SK-N-SH (cell line): ENCODE measurements at regions of chr1 and their contacts with region 1.

Region 1: DNA sequence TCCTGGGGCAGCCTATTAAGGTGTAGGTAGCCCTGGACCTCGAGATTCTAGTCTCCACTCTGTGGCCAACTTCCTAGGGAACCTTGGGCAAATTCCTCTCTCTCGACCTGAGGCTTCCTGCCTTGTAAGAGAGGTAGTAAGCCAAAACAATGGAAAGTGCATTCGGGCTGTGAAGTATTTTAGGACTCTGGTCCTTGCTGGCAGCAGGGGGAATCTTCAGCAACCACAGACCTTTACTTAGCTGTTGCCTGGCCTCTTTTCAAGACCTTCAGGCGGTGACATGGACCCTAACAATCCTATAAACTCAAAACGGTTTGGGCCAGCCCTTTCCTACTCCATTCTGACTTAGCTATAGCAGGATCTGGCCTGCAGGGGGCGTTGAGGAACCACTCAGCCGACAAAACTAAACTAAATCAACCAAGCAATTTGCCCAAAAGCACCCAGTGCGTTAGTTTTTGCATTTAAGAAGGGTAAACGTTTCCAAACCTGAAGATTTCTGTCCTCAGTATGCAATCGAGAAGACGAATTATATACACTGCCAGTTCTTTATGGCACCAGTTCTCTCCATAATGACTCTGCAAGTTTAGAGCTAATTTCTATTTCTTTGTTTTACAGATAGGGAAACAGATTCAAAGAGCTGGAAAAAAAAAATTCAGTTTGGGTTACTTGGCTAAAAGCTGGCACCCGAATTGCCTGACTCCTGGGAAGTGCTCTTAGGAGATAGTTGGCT is 10.9 kb upstream of the SESN2 start:
- DNase-seq: peak; percentile 69
- H3K4me3 ChIP-seq: peak overlapping the region; percentile 28 to 62
- H3K27ac ChIP-seq: peak overlapping the region; percentile 70 to 95
- H3K4me1 ChIP-seq: peaks cover 19 to 22% of the 10 kb centered on the region in 2 experiments; a peak in 3 of 4 replicates
- H3K27me3 ChIP-seq: no peaks in the 10 kb centered on the region
- CTCF ChIP-seq: peak; percentile 97
- EP300 ChIP-seq: no peak
- RAD21 ChIP-seq: peak; percentile 88

Region 2: GRCh38 chr1:28045777-28046176 is 202.7 kb before region 1 on chr1:
- CTCF ChIA-PET with region 1: no interaction called
- POLR2A ChIA-PET with region 1: no interaction called
- DNase-seq: no peak
- H3K4me3 ChIP-seq: no peak overlapping the region
- H3K27ac ChIP-seq: peak overlapping the region in 1 of 2 experiments; percentile 19; a peak in 2 of 4 replicates
- H3K4me1 ChIP-seq: peaks cover 0 to 9% of the 10 kb centered on the region in 2 experiments; a peak in 1 of 4 replicates
- H3K27me3 ChIP-seq: no peaks in the 10 kb centered on the region
- CTCF ChIP-seq: no peak
- EP300 ChIP-seq: no peak
- RAD21 ChIP-seq: no peak

Region 3: GRCh38 chr1:28235755-28236655 is 12.4 kb before region 1 on chr1 and contains the start of gene ATP5IF1:
- CTCF ChIA-PET with region 1: interaction called, 25 read pairs
- POLR2A ChIA-PET with region 1: interaction called, 8 read pairs
- DNase-seq: peak; percentile 97
- H3K4me3 ChIP-seq: peak within 1 kb of the TSS; percentile 87 to 90
- H3K27ac ChIP-seq: peak within 1 kb of the TSS; percentile 61 to 85
- H3K4me1 ChIP-seq: peaks cover 10 to 13% of the 10 kb centered on the region in 2 experiments
- H3K27me3 ChIP-seq: no peaks in the 10 kb centered on the region
- CTCF ChIP-seq: no peak
- EP300 ChIP-seq: no peak
- RAD21 ChIP-seq: no peak
- polyA plus RNA-seq, gene ATP5IF1: 303 and 594 TPM in 2 replicates

Region 4: DNA sequence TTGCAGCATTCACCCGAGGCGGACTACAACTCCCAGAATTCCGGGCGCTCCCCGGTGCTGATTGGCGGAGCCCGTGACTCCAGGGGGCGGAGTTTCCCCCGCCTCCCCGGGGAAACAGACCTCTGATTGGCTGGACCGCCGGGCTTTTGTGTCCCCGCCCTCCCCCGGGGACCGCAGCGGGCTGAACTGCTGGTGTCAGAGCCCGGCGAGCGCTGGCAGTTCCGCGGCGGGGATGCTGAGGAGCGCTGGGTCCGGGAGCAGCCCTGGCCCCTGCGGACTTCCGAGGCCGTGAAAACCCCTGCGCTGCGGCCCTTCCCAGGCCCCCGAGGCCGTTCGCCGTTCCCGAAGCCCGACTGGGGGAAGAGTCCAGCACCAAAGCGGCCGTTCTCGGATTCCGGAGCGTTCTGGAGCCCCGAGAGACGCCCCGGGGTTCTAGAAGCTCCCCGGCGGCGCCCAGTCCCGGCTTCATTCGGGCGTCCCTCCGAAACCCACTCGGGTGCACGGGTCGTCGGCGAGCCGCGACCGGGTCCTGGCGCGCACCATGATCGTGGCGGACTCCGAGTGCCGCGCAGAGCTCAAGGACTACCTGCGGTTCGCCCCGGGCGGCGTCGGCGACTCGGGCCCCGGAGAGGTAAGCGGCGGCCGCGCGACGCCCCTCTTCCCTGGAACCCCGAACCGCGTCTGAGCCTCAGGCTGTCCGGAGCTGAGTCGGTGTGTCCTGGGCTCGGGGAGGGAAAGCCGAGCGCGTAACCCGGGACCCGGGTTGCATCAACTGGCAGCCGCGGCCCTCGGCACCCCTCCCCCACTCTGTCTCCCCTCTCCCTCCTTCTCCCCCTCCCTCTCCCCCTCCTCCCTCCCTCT is 11.1 kb after region 1 on chr1 and contains the start of gene SESN2:
- CTCF ChIA-PET with region 1: interaction called, 36 read pairs
- POLR2A ChIA-PET with region 1: interaction called, 5 read pairs
- DNase-seq: peak; percentile 98
- H3K4me3 ChIP-seq: peak within 1 kb of the TSS; percentile 78 to 96
- H3K27ac ChIP-seq: peak within 1 kb of the TSS; percentile 82 to 83
- H3K4me1 ChIP-seq: peaks cover 12 to 14% of the 10 kb centered on the region in 2 experiments; a peak in 1 of 4 replicates
- H3K27me3 ChIP-seq: no peaks in the 10 kb centered on the region
- CTCF ChIP-seq: no peak
- EP300 ChIP-seq: no peak
- RAD21 ChIP-seq: no peak
- polyA plus RNA-seq, gene SESN2: 14.1 and 15.4 TPM in 2 replicates

Region 5: GRCh38 chr1:28329395-28330153 is 81.1 kb after region 1 on chr1:
- CTCF ChIA-PET with region 1: interaction called, 13 read pairs
- POLR2A ChIA-PET with region 1: interaction called, 11 read pairs
- DNase-seq: peak; percentile 28
- H3K4me3 ChIP-seq: peak overlapping the region; percentile 48 to 89
- H3K27ac ChIP-seq: peak overlapping the region; percentile 78 to 93
- H3K4me1 ChIP-seq: peaks cover 7 to 9% of the 10 kb centered on the region in 2 experiments; a peak in 2 of 4 replicates
- H3K27me3 ChIP-seq: no peaks in the 10 kb centered on the region
- CTCF ChIP-seq: no peak
- EP300 ChIP-seq: no peak
- RAD21 ChIP-seq: no peak

Region 6: GRCh38 chr1:28354121-28354520 is 105.7 kb after region 1 on chr1:
- CTCF ChIA-PET with region 1: interaction called, 23 read pairs
- POLR2A ChIA-PET with region 1: no interaction called
- DNase-seq: no peak
- H3K4me3 ChIP-seq: no peak overlapping the region
- H3K27ac ChIP-seq: peak overlapping the region in 1 of 2 experiments; percentile 61; a peak in 2 of 4 replicates
- H3K4me1 ChIP-seq: no peaks in the 10 kb centered on the region; a peak in 1 of 4 replicates
- H3K27me3 ChIP-seq: no peaks in the 10 kb centered on the region
- CTCF ChIP-seq: no peak
- EP300 ChIP-seq: no peak
- RAD21 ChIP-seq: no peak

Region 7: GRCh38 chr1:28359592-28360239 is 111.3 kb after region 1 on chr1:
- CTCF ChIA-PET with region 1: interaction called, 23 read pairs
- POLR2A ChIA-PET with region 1: no interaction called
- DNase-seq: peak; percentile 75
- H3K4me3 ChIP-seq: peak overlapping the region in 1 of 2 experiments; percentile 39; a peak in 1 of 4 replicates
- H3K27ac ChIP-seq: no peak overlapping the region
- H3K4me1 ChIP-seq: no peaks in the 10 kb centered on the region
- H3K27me3 ChIP-seq: no peaks in the 10 kb centered on the region
- CTCF ChIP-seq: peak; percentile 80
- EP300 ChIP-seq: no peak
- RAD21 ChIP-seq: peak; percentile 78

Region 8: GRCh38 chr1:28602536-28603439 is 354.3 kb after region 1 on chr1:
- CTCF ChIA-PET with region 1: interaction called, 16 read pairs
- POLR2A ChIA-PET with region 1: no interaction called
- DNase-seq: peak; percentile 80
- H3K4me3 ChIP-seq: no peak overlapping the region; a peak in 1 of 4 replicates
- H3K27ac ChIP-seq: peak overlapping the region in 1 of 2 experiments; percentile 69; a peak in 2 of 4 replicates
- H3K4me1 ChIP-seq: peaks cover 0 to 13% of the 10 kb centered on the region in 2 experiments; a peak in 3 of 4 replicates
- H3K27me3 ChIP-seq: no peaks in the 10 kb centered on the region
- CTCF ChIP-seq: peak; percentile 86
- EP300 ChIP-seq: no peak
- RAD21 ChIP-seq: peak; percentile 92